ENCODE measurements at regions of chr6 and their contacts with region 1.

Region 1: DNA sequence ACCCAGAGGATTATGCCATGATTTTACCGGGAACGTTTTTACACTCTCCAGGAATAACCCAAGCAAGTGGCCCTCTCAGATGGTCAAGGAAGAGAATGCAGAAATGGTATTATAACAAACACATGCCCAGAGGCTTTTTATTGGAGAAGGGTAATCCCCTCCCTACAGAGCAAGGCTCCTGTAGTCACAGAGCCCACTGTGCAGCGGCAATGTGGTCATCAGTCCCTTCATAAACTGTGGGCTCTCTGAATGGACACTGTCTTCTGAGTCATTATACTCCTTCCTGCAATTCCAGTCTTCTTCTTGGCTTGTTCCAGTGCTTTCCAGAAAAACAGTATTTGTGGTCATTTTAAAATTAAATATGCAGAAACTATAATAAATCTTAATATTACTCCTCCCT is 74.7 kb downstream of the LAMA4 start:
- DNase-seq: no peak
- H3K4me3 ChIP-seq: no peak overlapping the region
- H3K27ac ChIP-seq: peak overlapping the region in 1 of 2 donors; percentile 10
- H3K4me1 ChIP-seq: no peaks in the 10 kb centered on the region
- H3K27me3 ChIP-seq: no peaks in the 10 kb centered on the region
- CTCF ChIP-seq: no peak
- POLR2A ChIP-seq: no peak

Region 2: DNA sequence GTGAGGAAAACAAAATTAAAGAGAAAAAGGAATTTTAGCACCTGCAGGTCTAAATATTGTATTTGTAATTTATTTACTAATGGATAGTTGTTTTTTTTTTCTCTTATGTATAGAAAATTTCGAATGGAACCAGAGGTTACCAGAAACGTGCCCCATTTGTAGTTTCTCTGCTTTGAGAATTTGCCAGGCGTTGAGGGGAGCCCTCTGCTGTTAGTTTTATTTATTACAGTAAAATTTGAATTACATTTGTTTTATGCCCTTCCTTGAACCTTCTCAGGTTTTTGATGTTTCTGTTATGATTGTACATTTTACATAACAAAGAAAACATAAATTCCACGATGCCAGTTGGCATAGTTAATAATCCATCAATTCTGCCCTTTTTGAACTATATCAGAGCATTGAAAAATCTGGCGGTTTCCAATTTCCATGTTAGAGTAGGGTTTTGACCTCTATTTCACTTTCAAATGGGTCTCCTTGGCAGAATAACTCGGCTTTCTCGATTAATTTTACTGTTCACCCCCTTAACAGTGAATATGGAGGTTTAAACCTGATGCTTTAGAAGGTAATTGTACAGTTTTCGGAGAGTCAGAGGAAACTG is 132.4 kb after region 1 on chr6:
- intact Hi-C with region 1: loop called (anchors 5 kb)
- DNase-seq: no peak
- H3K4me3 ChIP-seq: no peak overlapping the region
- H3K27ac ChIP-seq: peak overlapping the region; percentile 31 to 37
- H3K4me1 ChIP-seq: no peaks in the 10 kb centered on the region
- H3K27me3 ChIP-seq: no peaks in the 10 kb centered on the region
- CTCF ChIP-seq: peak; percentile 65 to 77 (median 74)
- POLR2A ChIP-seq: no peak

Region 3: GRCh38 chr6:112600168-112600567 is 420.5 kb after region 1 on chr6:
- intact Hi-C with region 1: no loop called
- DNase-seq: no peak
- H3K4me3 ChIP-seq: no peak overlapping the region
- H3K27ac ChIP-seq: no peak overlapping the region
- H3K4me1 ChIP-seq: no peaks in the 10 kb centered on the region
- H3K27me3 ChIP-seq: no peaks in the 10 kb centered on the region
- CTCF ChIP-seq: no peak
- POLR2A ChIP-seq: no peak